CD4-positive, alpha-beta memory T cell (primary cell): ENCODE measurements at regions of chr19 and their contacts with region 1.

Region 1: GRCh38 chr19:19138169-19138981 is at the start of gene TMEM161A:
- DNase-seq: peak; percentile 93 to 97 (median 94)
- H3K4me3 ChIP-seq: peak within 1 kb of the TSS; percentile 80 to 85
- H3K4me3 Mint-ChIP-seq: peak within 1 kb of the TSS; percentile 91 to 99 (median 98)
- H3K27ac ChIP-seq: peak within 1 kb of the TSS; percentile 71
- H3K27ac Mint-ChIP-seq: peak within 1 kb of the TSS; percentile 76 to 99 (median 96)
- H3K4me1 ChIP-seq: peaks cover 28% of the 10 kb centered on the region
- H3K4me1 Mint-ChIP-seq: peaks cover 10 to 32% (median 21%) of the 10 kb centered on the region in 4 donors
- H3K27me3 ChIP-seq: no peaks in the 10 kb centered on the region
- H3K27me3 Mint-ChIP-seq: no peaks in the 10 kb centered on the region
- total RNA-seq, gene TMEM161A: 22.5 to 25.1 TPM

Region 2: DNA sequence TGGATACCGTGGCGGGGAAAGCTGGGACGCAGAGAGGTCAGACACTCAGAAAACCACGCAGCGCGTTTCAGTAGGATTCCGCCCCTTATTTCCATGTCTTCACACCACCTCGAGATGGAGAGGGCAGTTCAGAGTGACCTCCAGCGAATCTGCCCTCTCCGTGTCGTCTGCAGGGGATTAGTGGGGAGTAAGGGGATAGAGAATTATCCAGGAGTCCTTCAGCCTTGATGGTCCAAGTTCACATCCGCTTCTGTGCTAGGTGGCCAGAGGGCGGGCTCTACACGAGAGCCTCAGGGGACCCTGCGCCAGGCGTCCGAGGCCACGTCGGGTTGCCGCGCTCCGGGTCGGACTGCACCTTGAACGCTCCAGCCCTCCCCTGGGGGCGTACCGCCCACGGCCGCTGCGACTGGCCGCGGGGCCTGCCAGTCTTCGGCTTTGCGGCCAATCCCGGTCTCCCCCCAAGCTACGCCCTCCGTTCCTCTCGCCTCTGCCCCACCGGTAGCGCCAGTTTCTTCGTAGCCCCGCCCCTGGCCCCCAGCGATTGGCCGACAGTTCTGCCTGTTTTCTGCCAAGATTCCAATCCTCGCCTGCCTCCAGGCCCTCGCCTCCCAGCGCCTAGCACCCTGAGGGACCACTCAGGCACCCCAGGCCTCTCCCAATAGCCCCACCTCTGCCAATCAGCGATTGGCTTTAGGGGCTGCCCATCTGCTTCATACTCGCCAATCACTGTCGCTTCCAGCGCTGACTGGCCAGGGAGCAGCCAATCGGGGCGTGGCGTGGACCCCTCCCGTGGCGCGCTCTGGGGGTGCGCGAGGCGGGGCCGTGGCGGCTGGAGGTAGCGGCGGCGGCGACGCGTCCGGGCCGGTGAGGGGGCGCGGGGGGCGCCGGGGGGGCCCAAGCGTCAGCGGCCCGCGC is 74.9 kb before region 1 on chr19 and contains the start of gene SLC25A42:
- CTCF ChIA-PET with region 1: interaction called, 3 read pairs
- POLR2A ChIA-PET with region 1: interaction called, 3 read pairs
- intact Hi-C with region 1: loop called (anchors 2 kb)
- DNase-seq: peak; percentile 99 to 100 (median 99)
- H3K4me3 ChIP-seq: peak within 1 kb of the TSS; percentile 83 to 85
- H3K4me3 Mint-ChIP-seq: peak within 1 kb of the TSS; percentile 84 to 95 (median 91)
- H3K27ac ChIP-seq: peak within 1 kb of the TSS; percentile 57
- H3K27ac Mint-ChIP-seq: peak within 1 kb of the TSS; percentile 82 to 93 (median 91)
- H3K4me1 ChIP-seq: peaks cover 38% of the 10 kb centered on the region
- H3K4me1 Mint-ChIP-seq: peaks cover 19 to 43% (median 28%) of the 10 kb centered on the region in 4 donors
- H3K27me3 ChIP-seq: no peaks in the 10 kb centered on the region
- H3K27me3 Mint-ChIP-seq: no peaks in the 10 kb centered on the region
- total RNA-seq, gene SLC25A42: 28.3 to 31.6 TPM

Region 3: DNA sequence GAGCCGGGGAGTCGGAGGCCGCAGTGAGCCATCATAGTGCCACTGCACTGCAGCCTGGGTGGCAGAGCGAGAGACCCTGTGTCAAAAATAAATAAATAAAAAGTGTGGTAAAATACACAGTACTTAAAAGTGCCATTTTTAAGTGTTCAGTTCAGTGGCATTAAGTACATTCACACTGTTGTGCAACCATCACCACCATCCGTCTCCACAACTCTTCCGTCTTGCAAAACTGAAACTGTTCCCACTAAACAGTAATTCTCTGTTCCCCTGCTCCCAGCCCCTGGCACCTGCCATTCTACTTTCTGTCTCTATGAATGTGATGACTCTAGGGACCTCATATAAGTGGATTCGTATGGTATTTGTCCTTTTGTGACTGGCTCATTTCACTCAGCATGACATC is 61.3 kb before region 1 on chr19:
- CTCF ChIA-PET with region 1: no interaction called
- POLR2A ChIA-PET with region 1: no interaction called
- intact Hi-C with region 1: no loop called
- DNase-seq: no peak
- H3K4me3 ChIP-seq: no peak overlapping the region
- H3K4me3 Mint-ChIP-seq: no peak overlapping the region
- H3K27ac ChIP-seq: no peak overlapping the region
- H3K27ac Mint-ChIP-seq: no peak overlapping the region
- H3K4me1 ChIP-seq: no peaks in the 10 kb centered on the region
- H3K4me1 Mint-ChIP-seq: peaks cover 19 to 51% (median 22%) of the 10 kb centered on the region in 4 donors
- H3K27me3 ChIP-seq: no peaks in the 10 kb centered on the region
- H3K27me3 Mint-ChIP-seq: no peaks in the 10 kb centered on the region

Region 4: GRCh38 chr19:19162495-19162894 is 24.1 kb after region 1 on chr19:
- CTCF ChIA-PET with region 1: no interaction called
- POLR2A ChIA-PET with region 1: no interaction called
- intact Hi-C with region 1: no loop called
- DNase-seq: no peak
- H3K4me3 ChIP-seq: no peak overlapping the region
- H3K4me3 Mint-ChIP-seq: no peak overlapping the region
- H3K27ac ChIP-seq: no peak overlapping the region
- H3K27ac Mint-ChIP-seq: no peak overlapping the region
- H3K4me1 ChIP-seq: no peaks in the 10 kb centered on the region
- H3K4me1 Mint-ChIP-seq: peaks cover 0 to 2% (median under 1%) of the 10 kb centered on the region in 4 donors
- H3K27me3 ChIP-seq: no peaks in the 10 kb centered on the region
- H3K27me3 Mint-ChIP-seq: no peaks in the 10 kb centered on the region

Region 5: DNA sequence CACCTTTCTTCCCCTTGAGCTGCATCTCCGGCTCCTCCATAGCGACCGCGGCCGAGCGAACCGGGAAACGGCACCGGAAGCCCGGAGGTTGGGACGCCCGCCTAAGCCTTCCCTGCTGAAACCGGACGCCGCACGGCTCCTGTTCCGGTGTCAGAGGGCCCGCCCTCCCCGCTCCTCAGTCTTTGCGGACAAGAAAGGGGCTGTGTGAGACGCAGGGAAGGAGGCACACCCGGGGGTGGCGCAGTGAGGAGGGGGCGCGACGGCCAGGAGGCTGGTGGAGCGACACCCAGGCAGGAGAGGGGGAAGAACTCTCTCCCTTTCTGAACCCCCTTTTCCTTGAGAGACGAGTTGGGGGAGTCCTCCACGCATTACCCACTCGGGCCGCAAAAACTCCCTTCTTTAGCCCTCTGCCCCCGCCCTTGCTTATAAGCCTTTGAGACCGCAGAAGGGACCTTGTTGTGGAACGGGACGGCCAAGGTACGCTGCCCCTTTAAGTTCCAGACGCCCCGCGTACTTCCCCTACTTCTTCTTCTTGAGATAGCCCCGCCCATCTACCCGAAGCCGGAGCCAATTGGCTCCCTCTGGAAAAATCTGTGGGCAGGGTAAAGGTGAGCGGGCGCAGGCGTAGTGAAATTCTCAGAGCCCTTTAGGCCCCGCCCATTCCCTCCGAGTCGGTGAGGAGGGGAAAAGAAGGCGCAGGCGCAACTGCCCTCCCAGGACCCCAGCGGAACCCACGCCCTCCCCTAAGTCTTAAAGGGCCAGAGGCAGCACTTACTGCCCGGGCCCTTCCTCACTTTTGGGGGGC is 53.9 kb after region 1 on chr19 and contains the starts of genes BORCS8 and RFXANK:
- CTCF ChIA-PET with region 1: no interaction called
- POLR2A ChIA-PET with region 1: no interaction called
- intact Hi-C with region 1: loop called (anchors 5 kb)
- DNase-seq: peak; percentile 97 to 99 (median 99)
- H3K4me3 ChIP-seq: peak within 1 kb of the TSS; percentile 98 to 100
- H3K4me3 Mint-ChIP-seq: peak within 1 kb of the TSS; percentile 95 to 99 (median 98)
- H3K27ac ChIP-seq: peak within 1 kb of the TSS; percentile 100
- H3K27ac Mint-ChIP-seq: peak within 1 kb of the TSS; percentile 98 to 100 (median 99)
- H3K4me1 ChIP-seq: peaks cover 44% of the 10 kb centered on the region
- H3K4me1 Mint-ChIP-seq: peaks cover 18 to 55% (median 37%) of the 10 kb centered on the region in 4 donors
- H3K27me3 ChIP-seq: no peaks in the 10 kb centered on the region
- H3K27me3 Mint-ChIP-seq: no peaks in the 10 kb centered on the region
- total RNA-seq, gene BORCS8: 36.0 to 41.2 TPM
- total RNA-seq, gene RFXANK: 69.5 to 77.2 TPM